CD8-positive, alpha-beta T cell (primary cell): ENCODE measurements at regions of chr7 and their contacts with region 1.

Region 1: DNA sequence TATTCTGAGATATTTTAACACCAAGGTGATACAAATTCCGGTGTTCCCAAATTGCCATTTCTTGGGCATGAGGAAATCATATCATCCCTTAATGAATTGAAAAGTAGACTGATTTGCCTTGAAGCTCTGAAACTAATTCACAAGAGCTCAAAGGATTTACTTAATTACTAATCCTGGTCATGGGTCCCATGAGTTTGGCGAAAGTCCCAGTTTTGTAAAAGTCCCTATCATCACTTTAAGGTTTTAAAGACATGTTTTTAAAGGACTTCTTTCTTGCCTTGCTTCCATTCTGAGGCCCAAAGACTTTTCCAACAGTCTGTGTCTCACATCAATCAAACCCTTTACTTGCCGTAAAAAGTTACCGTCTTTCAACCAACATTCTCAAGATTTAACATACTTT is 377.9 kb downstream of the DNAJB9 start:
- DNase-seq: no peak
- ATAC-seq: no peak
- H3K4me3 ChIP-seq: no peak overlapping the region
- H3K4me3 Mint-ChIP-seq: no peak overlapping the region
- H3K27ac ChIP-seq: no peak overlapping the region
- H3K27ac Mint-ChIP-seq: no peak overlapping the region
- H3K4me1 ChIP-seq: no peaks in the 10 kb centered on the region
- H3K4me1 Mint-ChIP-seq: no peaks in the 10 kb centered on the region
- H3K27me3 ChIP-seq: no peaks in the 10 kb centered on the region
- H3K27me3 Mint-ChIP-seq: no peaks in the 10 kb centered on the region
- CTCF ChIP-seq: no peak

Region 2: DNA sequence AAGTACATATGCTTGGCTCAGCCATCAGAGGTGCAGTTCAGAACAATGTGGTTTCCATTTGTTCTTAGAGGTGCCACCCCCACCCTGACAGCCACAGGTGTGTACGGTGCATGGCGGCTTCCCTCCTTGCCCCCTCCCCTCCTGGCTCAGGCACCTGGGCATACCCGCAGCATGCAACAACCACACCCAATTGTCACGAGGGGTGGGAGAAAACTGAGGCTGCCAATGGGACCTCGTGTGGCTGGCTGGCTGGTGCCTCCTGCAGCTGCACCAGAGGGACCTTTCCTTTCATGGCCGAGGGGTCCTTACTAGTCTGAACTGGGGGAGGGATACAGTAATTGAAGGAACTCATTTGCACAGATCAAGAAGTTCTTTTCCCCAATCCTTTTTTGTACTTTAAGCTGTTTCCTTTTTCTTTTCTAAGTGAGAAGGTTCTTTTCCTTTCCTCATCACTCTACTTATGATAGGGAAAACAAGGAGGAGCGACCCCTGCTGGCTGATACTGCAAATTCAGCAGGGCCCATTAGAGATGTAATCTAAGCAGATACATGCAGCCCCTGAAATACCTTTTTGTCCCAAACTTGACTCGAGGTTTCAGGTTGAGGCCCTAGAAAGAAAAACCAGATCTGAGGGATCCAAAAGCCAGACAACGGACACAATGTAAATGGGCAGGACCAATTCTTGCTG is 72.5 kb before region 1 on chr7:
- CTCF ChIA-PET with region 1: no interaction called
- POLR2A ChIA-PET with region 1: no interaction called
- intact Hi-C with region 1: loop called in 1 of 2 experiments (anchors 2 kb)
- DNase-seq: no peak
- ATAC-seq: no peak
- H3K4me3 ChIP-seq: no peak overlapping the region
- H3K4me3 Mint-ChIP-seq: no peak overlapping the region
- H3K27ac ChIP-seq: no peak overlapping the region
- H3K27ac Mint-ChIP-seq: no peak overlapping the region
- H3K4me1 ChIP-seq: no peaks in the 10 kb centered on the region
- H3K4me1 Mint-ChIP-seq: no peaks in the 10 kb centered on the region
- H3K27me3 ChIP-seq: no peaks in the 10 kb centered on the region
- H3K27me3 Mint-ChIP-seq: no peaks in the 10 kb centered on the region
- CTCF ChIP-seq: no peak

Region 3: GRCh38 chr7:108911016-108911415 is 36.5 kb before region 1 on chr7:
- CTCF ChIA-PET with region 1: no interaction called
- POLR2A ChIA-PET with region 1: no interaction called
- intact Hi-C with region 1: loop called in 1 of 2 experiments (anchors 1 kb)
- DNase-seq: no peak
- ATAC-seq: no peak
- H3K4me3 ChIP-seq: no peak overlapping the region
- H3K4me3 Mint-ChIP-seq: no peak overlapping the region
- H3K27ac ChIP-seq: no peak overlapping the region
- H3K27ac Mint-ChIP-seq: no peak overlapping the region
- H3K4me1 ChIP-seq: no peaks in the 10 kb centered on the region
- H3K4me1 Mint-ChIP-seq: no peaks in the 10 kb centered on the region
- H3K27me3 ChIP-seq: no peaks in the 10 kb centered on the region
- H3K27me3 Mint-ChIP-seq: no peaks in the 10 kb centered on the region
- CTCF ChIP-seq: no peak